CD8-positive, alpha-beta T cell (primary cell): ENCODE measurements at regions of chr17 and their contacts with region 1.

Region 1: GRCh38 chr17:47305302-47305923 is 18.3 kb upstream of the EFCAB13 start:
- DNase-seq: no peak
- ATAC-seq: peak; percentile 40
- H3K4me3 ChIP-seq: no peak overlapping the region
- H3K4me3 Mint-ChIP-seq: no peak overlapping the region
- H3K27ac ChIP-seq: no peak overlapping the region
- H3K27ac Mint-ChIP-seq: peak overlapping the region; percentile 73
- H3K4me1 ChIP-seq: no peaks in the 10 kb centered on the region
- H3K4me1 Mint-ChIP-seq: peaks cover 11% of the 10 kb centered on the region
- H3K27me3 ChIP-seq: no peaks in the 10 kb centered on the region
- H3K27me3 Mint-ChIP-seq: no peaks in the 10 kb centered on the region
- CTCF ChIP-seq: no peak

Region 2: GRCh38 chr17:47253541-47254402 is 51.6 kb before region 1 on chr17 and contains the start of gene ITGB3:
- CTCF ChIA-PET with region 1: no interaction called
- POLR2A ChIA-PET with region 1: no interaction called
- intact Hi-C with region 1: loop called in 1 of 2 experiments (anchors 5 kb)
- DNase-seq: peak; percentile 28 to 78 (median 59)
- ATAC-seq: peak; percentile 90
- H3K4me3 ChIP-seq: peak within 1 kb of the TSS; percentile 44 to 49
- H3K4me3 Mint-ChIP-seq: peak within 1 kb of the TSS; percentile 87
- H3K27ac ChIP-seq: no peak within 1 kb of the TSS
- H3K27ac Mint-ChIP-seq: no peak within 1 kb of the TSS
- H3K4me1 ChIP-seq: peaks cover 4% of the 10 kb centered on the region
- H3K4me1 Mint-ChIP-seq: peaks cover 12% of the 10 kb centered on the region
- H3K27me3 ChIP-seq: peaks cover 0 to 12% of the 10 kb centered on the region in 2 experiments
- H3K27me3 Mint-ChIP-seq: peaks cover 63% of the 10 kb centered on the region
- CTCF ChIP-seq: no peak
- total RNA-seq, gene ITGB3: not detected

Region 3: DNA sequence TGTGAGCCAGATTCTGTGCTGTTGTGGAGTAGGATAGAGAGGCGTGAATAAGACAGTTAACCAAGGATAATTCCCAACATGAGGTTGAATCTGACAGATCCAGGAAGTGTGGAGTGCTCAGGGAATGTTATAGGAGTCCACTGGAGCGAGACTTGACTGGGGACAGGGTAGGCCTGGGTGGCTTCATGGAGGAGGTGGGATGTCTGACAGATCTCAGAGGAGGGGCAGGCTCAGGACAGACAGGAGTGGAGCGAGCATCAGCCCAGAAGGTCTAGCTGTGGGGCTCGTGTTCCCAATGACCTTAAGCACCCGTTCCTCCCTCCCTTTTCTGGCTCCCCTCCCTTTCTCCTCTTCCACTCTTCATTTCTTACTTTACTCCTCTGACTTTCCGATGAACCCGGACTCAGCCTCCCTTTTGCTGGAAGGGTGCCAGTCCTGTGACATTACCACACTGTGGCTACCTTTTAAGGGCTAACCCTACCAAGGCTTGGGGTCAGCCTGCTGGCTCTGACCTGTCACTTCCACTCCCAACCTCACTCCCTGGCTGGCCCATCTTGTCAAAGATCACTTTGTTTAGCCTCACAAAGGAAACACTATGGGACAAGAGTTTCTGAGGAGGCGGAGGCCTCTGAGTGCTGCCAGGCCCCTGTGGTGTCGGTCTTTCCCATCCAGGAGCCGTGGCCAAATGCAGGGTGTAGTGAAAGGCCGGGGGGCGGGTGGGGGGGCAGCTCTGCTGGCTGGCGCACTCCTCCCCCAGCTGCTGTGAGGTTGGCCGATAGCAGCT is 10.2 kb before region 1 on chr17:
- CTCF ChIA-PET with region 1: no interaction called
- POLR2A ChIA-PET with region 1: no interaction called
- intact Hi-C with region 1: no loop called
- DNase-seq: no peak
- ATAC-seq: no peak
- H3K4me3 ChIP-seq: no peak overlapping the region
- H3K4me3 Mint-ChIP-seq: no peak overlapping the region
- H3K27ac ChIP-seq: no peak overlapping the region
- H3K27ac Mint-ChIP-seq: no peak overlapping the region
- H3K4me1 ChIP-seq: no peaks in the 10 kb centered on the region
- H3K4me1 Mint-ChIP-seq: no peaks in the 10 kb centered on the region
- H3K27me3 ChIP-seq: no peaks in the 10 kb centered on the region
- H3K27me3 Mint-ChIP-seq: peaks cover 11% of the 10 kb centered on the region
- CTCF ChIP-seq: no peak